ENCODE measurements at regions of chr17 and their contacts with region 1.

Region 1: GRCh38 chr17:41665566-41666236 is 23.0 kb upstream of the EIF1 start:
- DNase-seq: peak; percentile 81 to 96 (median 90)
- ATAC-seq: peak; percentile 87
- H3K4me3 ChIP-seq: peak overlapping the region; percentile 87
- H3K4me3 Mint-ChIP-seq: peak overlapping the region; percentile 85 to 95 (median 92)
- H3K27ac ChIP-seq: peak overlapping the region; percentile 97
- H3K27ac Mint-ChIP-seq: peak overlapping the region; percentile 88 to 100 (median 96)
- H3K4me1 ChIP-seq: peaks cover 4 to 7% of the 10 kb centered on the region in 2 donors
- H3K4me1 Mint-ChIP-seq: peaks cover 17 to 54% (median 21%) of the 10 kb centered on the region in 7 donors
- H3K27me3 ChIP-seq: no peaks in the 10 kb centered on the region
- H3K27me3 Mint-ChIP-seq: peaks cover 0 to 13% (median 0%) of the 10 kb centered on the region in 5 donors

Region 2: DNA sequence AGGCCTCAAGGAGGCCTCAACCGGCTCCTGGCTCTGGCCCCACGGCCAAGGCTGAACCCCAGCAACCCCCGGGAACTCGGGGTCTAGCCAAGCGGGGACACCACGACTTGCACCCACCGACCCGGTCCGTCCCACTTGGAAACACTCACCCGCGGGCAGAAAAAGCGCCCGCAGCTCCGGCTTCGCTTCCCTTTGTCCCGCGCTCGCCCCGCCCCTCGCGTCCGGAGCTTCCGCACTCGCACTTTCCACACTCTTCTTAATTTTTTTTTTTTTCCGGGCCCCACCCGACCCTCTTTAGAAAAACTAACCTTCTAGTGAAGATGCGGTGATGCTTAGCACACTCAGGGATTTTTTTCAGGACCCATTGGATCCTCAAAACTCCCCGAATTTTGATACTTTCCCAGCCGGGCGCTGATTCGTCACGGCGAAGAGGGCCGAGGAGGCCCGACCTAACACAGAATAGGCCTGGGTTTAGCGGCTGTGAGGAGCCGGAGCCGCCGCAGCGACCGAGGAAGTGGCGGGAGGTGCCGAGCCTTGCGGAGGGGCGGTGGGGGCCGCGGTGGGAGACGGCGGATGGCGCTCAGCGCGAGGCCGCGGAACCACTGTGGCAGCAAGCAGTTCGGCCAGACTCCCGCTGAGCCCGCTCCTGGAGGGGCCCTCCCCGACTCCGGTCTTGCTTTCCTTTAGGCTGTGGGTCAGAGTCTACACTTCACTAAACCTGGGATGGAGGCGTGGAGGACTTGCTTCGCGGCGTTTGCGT is 1017.9 kb before region 1 on chr17 and contains the start of gene SMARCE1:
- CTCF ChIA-PET with region 1: interaction called, 3 read pairs
- POLR2A ChIA-PET with region 1: no interaction called
- intact Hi-C with region 1: loop called in 1 of 2 experiments (anchors 10 kb)
- DNase-seq: peak; percentile 63 to 81 (median 76)
- ATAC-seq: peak; percentile 87
- H3K4me3 ChIP-seq: peak within 1 kb of the TSS; percentile 89
- H3K4me3 Mint-ChIP-seq: peak within 1 kb of the TSS; percentile 86 to 99 (median 90)
- H3K27ac ChIP-seq: peak within 1 kb of the TSS; percentile 95
- H3K27ac Mint-ChIP-seq: peak within 1 kb of the TSS; percentile 86 to 100 (median 98)
- H3K4me1 ChIP-seq: peaks cover 11 to 33% of the 10 kb centered on the region in 2 donors
- H3K4me1 Mint-ChIP-seq: peaks cover 27 to 64% (median 46%) of the 10 kb centered on the region in 7 donors
- H3K27me3 ChIP-seq: no peaks in the 10 kb centered on the region
- H3K27me3 Mint-ChIP-seq: no peaks in the 10 kb centered on the region
- total RNA-seq, gene SMARCE1: 65.4 to 101 (median 79.2) TPM

Region 3: GRCh38 chr17:40854159-40854814 is 811.4 kb before region 1 on chr17:
- CTCF ChIA-PET with region 1: interaction called, 88 read pairs
- POLR2A ChIA-PET with region 1: interaction called, 6 read pairs
- intact Hi-C with region 1: loop called (anchors 1 to 2 kb)
- DNase-seq: no peak
- ATAC-seq: no peak
- H3K4me3 ChIP-seq: no peak overlapping the region
- H3K4me3 Mint-ChIP-seq: no peak overlapping the region
- H3K27ac ChIP-seq: no peak overlapping the region
- H3K27ac Mint-ChIP-seq: no peak overlapping the region
- H3K4me1 ChIP-seq: no peaks in the 10 kb centered on the region
- H3K4me1 Mint-ChIP-seq: peaks cover 0 to 6% (median 0%) of the 10 kb centered on the region in 7 donors
- H3K27me3 ChIP-seq: no peaks in the 10 kb centered on the region
- H3K27me3 Mint-ChIP-seq: peaks cover 19 to 53% (median 27%) of the 10 kb centered on the region in 5 donors

Region 4: DNA sequence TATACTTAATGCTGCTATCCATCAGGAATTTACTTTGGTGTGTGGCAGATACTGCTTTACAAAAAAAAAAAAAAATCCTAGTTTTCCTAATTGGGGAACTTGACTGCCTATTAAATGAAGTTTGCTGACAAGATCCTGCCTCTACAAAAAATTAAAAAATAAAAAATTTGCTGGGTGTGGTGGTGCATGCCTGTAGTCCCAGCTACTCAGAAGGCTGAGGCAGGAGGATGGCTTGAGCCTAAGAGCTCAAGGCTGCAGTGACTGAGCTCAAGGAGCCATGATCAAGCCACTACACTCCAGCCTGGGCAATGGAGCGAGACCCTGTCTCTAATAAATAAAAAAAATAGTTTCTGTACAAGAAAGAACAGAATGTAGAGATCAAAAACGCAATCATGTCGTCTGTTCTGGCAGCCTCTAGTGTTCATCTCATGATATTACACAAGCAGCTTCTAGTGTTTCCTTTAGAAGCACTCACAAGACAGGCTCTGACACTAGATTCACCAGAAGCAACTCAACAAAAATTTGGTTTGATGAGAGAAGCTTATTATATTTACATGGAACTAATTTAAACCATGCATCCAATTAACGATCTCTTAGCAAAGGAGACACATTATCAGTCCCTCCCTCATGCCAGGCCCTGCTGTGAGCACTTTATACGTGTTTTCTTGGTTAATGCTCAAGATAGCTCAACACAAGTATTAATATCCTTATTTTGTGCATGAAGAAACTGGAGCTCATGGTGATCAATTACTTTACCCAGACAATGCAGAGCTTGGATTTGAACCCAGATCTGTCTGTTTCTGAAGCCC is 343.4 kb before region 1 on chr17:
- CTCF ChIA-PET with region 1: interaction called, 17 read pairs
- POLR2A ChIA-PET with region 1: no interaction called
- intact Hi-C with region 1: loop called in 1 of 2 experiments (anchors 2 kb)
- DNase-seq: peak in 7 of 9 donors; percentile 50 to 75 (median 60)
- ATAC-seq: peak; percentile 81
- H3K4me3 ChIP-seq: no peak overlapping the region
- H3K4me3 Mint-ChIP-seq: peak overlapping the region in 2 of 10 donors; percentile 25 to 27
- H3K27ac ChIP-seq: no peak overlapping the region
- H3K27ac Mint-ChIP-seq: peak overlapping the region; percentile 34 to 87 (median 77)
- H3K4me1 ChIP-seq: peaks cover 26 to 44% of the 10 kb centered on the region in 2 donors
- H3K4me1 Mint-ChIP-seq: peaks cover 11 to 59% (median 50%) of the 10 kb centered on the region in 7 donors
- H3K27me3 ChIP-seq: no peaks in the 10 kb centered on the region
- H3K27me3 Mint-ChIP-seq: no peaks in the 10 kb centered on the region

Region 5: GRCh38 chr17:41548844-41549595 is 116.7 kb before region 1 on chr17:
- CTCF ChIA-PET with region 1: interaction called, 69 read pairs
- POLR2A ChIA-PET with region 1: interaction called, 7 read pairs
- intact Hi-C with region 1: loop called (anchors 1 kb)
- DNase-seq: peak; percentile 72 to 87 (median 82)
- ATAC-seq: peak; percentile 94
- H3K4me3 ChIP-seq: peak overlapping the region; percentile 43
- H3K4me3 Mint-ChIP-seq: peak overlapping the region; percentile 48 to 77 (median 68)
- H3K27ac ChIP-seq: peak overlapping the region; percentile 37
- H3K27ac Mint-ChIP-seq: peak overlapping the region; percentile 13 to 85 (median 73)
- H3K4me1 ChIP-seq: peaks cover 10 to 17% of the 10 kb centered on the region in 2 donors
- H3K4me1 Mint-ChIP-seq: peaks cover 8 to 18% (median 14%) of the 10 kb centered on the region in 7 donors
- H3K27me3 ChIP-seq: no peaks in the 10 kb centered on the region
- H3K27me3 Mint-ChIP-seq: peaks cover 0 to 13% (median 8%) of the 10 kb centered on the region in 5 donors

Region 6: DNA sequence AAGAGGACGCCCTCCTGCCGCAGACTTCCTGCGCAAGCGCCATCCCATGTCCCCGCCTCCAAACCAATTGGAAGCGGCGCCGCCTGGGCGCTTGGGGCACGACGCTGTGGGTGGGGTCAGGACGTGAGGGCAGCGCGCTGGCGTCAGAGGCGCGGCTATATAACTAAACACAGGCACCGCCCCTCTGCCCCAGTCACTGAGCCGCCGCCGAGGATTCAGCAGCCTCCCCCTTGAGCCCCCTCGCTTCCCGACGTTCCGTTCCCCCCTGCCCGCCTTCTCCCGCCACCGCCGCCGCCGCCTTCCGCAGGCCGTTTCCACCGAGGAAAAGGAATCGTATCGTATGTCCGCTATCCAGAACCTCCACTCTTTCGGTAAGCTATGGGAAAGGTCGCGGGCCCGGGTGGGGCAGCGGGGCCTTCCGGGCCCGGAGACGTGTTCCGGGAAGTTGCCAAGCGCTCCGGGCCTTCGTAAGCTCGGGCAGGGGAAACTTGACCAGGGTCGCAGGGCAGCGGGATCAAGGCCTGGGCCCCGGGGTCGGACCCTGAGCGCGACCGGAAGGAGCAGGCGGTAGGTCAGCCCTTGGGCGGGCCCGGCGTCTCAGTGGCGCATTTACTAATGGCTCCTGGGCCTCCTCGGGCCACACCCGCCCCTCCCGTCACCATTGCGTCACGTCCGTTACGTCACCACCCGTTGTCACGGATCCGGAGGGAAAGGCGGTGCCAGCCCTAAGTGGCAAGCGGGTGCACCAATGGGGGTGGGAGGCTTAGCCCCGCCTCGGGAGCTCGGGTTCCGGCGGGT is 23.2 kb after region 1 on chr17 and contains the start of gene EIF1:
- CTCF ChIA-PET with region 1: interaction called, 74 read pairs
- POLR2A ChIA-PET with region 1: interaction called, 155 read pairs
- intact Hi-C with region 1: loop called (anchors 1 kb)
- DNase-seq: peak; percentile 98 to 100 (median 99)
- ATAC-seq: peak; percentile 85
- H3K4me3 ChIP-seq: peak within 1 kb of the TSS; percentile 86
- H3K4me3 Mint-ChIP-seq: peak within 1 kb of the TSS; percentile 90 to 99 (median 96)
- H3K27ac ChIP-seq: peak within 1 kb of the TSS; percentile 99
- H3K27ac Mint-ChIP-seq: peak within 1 kb of the TSS; percentile 98 to 99 (median 99)
- H3K4me1 ChIP-seq: peaks cover 22 to 25% of the 10 kb centered on the region in 2 donors
- H3K4me1 Mint-ChIP-seq: peaks cover 13 to 43% (median 35%) of the 10 kb centered on the region in 7 donors
- H3K27me3 ChIP-seq: no peaks in the 10 kb centered on the region
- H3K27me3 Mint-ChIP-seq: peaks cover 0 to 9% (median 0%) of the 10 kb centered on the region in 5 donors
- total RNA-seq, gene EIF1: 710 to 2,222 (median 934) TPM

Region 7: DNA sequence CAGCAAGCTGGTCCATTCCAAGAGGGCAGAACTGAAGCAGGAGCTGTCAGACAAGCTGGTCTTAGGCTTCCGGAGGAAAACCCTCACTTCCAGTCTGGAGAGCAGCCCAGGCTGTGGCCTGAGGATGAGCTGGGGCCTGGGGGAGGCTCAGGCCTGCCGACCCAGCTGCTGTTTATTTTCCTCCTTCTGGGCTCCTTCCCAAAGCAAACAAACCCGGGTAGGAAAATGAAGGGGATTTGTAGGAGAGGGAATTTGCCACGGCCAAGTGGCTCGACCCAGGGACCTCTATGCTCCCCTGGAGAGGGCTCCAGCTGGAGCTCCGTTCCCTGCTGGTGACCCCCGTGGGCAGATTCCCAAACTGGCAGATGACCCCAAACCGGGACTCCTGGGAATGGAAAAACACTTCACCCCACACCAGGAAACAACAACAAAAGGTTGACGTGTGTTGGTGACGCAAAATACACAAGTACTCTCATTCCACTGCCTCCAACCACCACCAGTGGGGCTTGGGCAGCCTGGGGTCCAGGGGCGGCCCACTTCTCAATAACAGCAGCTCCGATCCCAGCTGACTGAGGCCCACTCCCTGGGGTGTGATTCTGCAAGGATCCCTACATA is 112.0 kb after region 1 on chr17:
- CTCF ChIA-PET with region 1: no interaction called
- POLR2A ChIA-PET with region 1: no interaction called
- intact Hi-C with region 1: no loop called
- DNase-seq: no peak
- ATAC-seq: no peak
- H3K4me3 ChIP-seq: no peak overlapping the region
- H3K4me3 Mint-ChIP-seq: peak overlapping the region in 1 of 10 donors; percentile 25
- H3K27ac ChIP-seq: no peak overlapping the region
- H3K27ac Mint-ChIP-seq: no peak overlapping the region
- H3K4me1 ChIP-seq: no peaks in the 10 kb centered on the region
- H3K4me1 Mint-ChIP-seq: no peaks in the 10 kb centered on the region
- H3K27me3 ChIP-seq: no peaks in the 10 kb centered on the region
- H3K27me3 Mint-ChIP-seq: peaks cover 6 to 17% (median 14%) of the 10 kb centered on the region in 5 donors

Region 8: GRCh38 chr17:41957031-41957868 is 291.5 kb after region 1 on chr17:
- CTCF ChIA-PET with region 1: no interaction called
- POLR2A ChIA-PET with region 1: no interaction called
- intact Hi-C with region 1: no loop called
- DNase-seq: no peak
- ATAC-seq: no peak
- H3K4me3 ChIP-seq: no peak overlapping the region
- H3K4me3 Mint-ChIP-seq: no peak overlapping the region
- H3K27ac ChIP-seq: no peak overlapping the region
- H3K27ac Mint-ChIP-seq: no peak overlapping the region
- H3K4me1 ChIP-seq: no peaks in the 10 kb centered on the region
- H3K4me1 Mint-ChIP-seq: peaks cover 0 to 4% (median 0%) of the 10 kb centered on the region in 7 donors
- H3K27me3 ChIP-seq: no peaks in the 10 kb centered on the region
- H3K27me3 Mint-ChIP-seq: peaks cover 0 to 5% (median 0%) of the 10 kb centered on the region in 5 donors